A673 (cell line): ENCODE measurements at regions of chr9 and their contacts with region 1.

Region 1: GRCh38 chr9:37329576-37329975 is 92.9 kb upstream of the GRHPR start:
- DNase-seq: peak; percentile 81
- H3K4me3 ChIP-seq: no peak overlapping the region
- H3K27ac ChIP-seq: no peak overlapping the region
- H3K4me1 ChIP-seq: peaks cover 96% of the 10 kb centered on the region
- H3K27me3 ChIP-seq: no peaks in the 10 kb centered on the region
- CTCF ChIP-seq: peak; percentile 72

Region 2: DNA sequence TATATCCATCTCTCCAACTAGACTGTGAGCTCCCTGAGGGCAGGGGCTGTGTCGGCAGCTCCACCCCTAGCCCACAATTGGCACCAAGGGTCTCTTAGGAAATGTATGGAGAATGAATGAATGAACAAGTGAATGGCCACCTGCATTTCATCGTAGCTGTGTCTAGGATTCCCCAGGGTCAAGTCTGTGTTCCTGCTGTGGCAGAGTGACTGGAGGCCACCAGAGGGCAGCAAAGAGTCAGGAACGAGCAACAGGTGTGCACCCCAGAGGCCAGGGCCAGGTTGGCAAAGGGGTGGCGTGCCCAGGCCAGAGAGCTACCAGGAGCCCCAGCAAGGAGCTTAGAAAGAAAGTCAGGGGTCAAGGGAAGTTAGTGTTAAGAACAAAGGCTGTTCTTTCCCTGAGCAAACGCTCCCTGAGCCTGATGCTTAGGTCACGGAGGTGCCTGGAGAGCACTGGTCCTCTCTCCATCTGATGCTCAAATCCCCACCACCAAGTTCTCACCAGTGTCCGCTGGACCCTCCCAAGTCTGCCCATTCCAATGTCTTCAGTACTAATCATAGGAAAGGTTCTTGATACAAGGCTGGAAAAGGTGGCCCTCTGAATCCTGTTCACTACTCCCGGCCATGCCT is 456.2 kb before region 1 on chr9:
- CTCF ChIA-PET with region 1: interaction called, 4 read pairs
- POLR2A ChIA-PET with region 1: no interaction called
- intact Hi-C with region 1: loop called (anchors 2 kb)
- DNase-seq: peak; percentile 72
- H3K4me3 ChIP-seq: no peak overlapping the region
- H3K27ac ChIP-seq: no peak overlapping the region
- H3K4me1 ChIP-seq: no peaks in the 10 kb centered on the region
- H3K27me3 ChIP-seq: no peaks in the 10 kb centered on the region
- CTCF ChIP-seq: peak; percentile 95

Region 3: DNA sequence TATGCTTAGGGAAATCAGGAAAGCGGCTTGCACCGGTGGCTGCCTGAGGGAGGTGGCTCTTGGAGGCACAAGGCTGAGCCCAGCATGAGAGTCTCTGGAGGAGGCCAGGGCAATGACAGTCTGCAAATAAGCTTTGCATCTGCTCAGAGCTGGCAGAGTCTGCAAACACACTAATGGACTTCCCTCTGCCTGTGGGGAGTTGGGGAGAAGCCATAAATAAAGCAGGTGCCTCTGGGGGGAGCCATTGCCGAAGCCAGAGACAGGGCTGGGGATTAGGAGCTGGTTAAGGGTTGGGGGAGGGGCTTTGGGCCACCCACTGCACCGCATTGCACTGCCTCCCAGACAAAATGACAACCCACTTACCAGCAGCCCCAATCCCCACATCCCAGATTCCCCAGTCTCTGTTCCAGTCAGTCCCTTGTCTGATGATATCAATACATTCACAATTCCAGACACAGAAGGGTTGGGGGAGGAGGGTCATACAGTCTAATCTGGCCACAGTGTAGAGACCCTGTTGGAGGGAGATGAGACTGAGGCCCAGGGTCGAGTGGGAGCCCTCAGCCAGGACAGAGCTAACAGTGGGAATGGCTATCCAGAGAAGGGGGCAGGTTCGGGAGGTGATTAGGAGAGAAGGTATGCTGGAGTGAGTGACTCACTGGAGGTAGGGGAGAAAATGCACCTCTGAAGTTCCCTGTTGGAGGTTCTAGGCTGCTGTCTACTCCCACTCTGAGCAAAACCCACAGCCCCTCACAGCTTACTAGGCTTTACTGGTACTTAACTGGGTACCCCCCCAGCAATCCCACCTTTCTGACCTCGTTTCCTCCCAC is 349.2 kb before region 1 on chr9:
- CTCF ChIA-PET with region 1: interaction called, 3 read pairs
- POLR2A ChIA-PET with region 1: no interaction called
- intact Hi-C with region 1: loop called (anchors 5 kb)
- DNase-seq: peak; percentile 91
- H3K4me3 ChIP-seq: no peak overlapping the region
- H3K27ac ChIP-seq: no peak overlapping the region
- H3K4me1 ChIP-seq: peaks cover 16% of the 10 kb centered on the region
- H3K27me3 ChIP-seq: no peaks in the 10 kb centered on the region
- CTCF ChIP-seq: peak; percentile 69

Region 4: DNA sequence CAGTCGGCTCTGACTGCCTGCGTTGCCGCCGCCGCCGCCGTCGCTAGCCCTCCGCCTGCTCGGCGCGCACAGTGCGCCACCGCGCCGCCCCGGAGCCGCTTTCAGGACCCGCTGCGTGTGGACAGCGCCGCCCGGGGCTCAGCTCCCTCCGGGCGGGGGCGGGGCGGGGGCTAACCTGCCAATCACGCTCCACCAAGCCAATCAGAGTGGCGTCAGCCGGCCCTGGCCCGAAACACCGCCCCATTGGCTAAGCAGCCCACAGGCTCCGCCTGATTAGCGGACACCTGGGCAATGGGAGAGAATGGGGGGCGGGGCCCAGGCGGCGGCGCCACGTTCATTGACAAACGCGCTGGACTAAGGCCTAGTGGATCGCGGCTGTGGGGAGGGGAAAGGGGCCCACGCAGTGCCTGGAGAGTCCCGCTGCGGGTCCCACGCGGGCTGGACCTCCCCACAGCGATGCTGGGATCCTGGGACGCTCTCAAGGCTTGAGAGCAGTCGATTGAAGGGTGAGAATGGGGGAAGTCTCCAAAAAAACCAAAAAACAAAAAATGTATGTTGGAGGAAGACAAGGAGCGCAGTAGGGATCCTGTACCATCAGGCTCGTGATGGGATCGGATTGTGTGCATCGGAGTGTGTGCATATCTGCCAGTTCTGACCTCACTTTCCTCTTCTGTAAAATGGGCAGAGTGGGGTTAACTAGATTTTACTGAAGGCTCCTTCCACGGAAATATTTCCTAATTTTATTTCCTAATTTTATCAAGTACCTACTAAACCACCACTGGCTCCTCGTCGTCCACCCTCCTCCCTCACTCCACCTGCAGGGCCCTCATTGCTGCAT is 301.8 kb before region 1 on chr9:
- CTCF ChIA-PET with region 1: no interaction called
- POLR2A ChIA-PET with region 1: no interaction called
- intact Hi-C with region 1: loop called (anchors 10 kb)
- DNase-seq: peak; percentile 99
- H3K4me3 ChIP-seq: peak overlapping the region; percentile 56
- H3K27ac ChIP-seq: no peak overlapping the region
- H3K4me1 ChIP-seq: no peaks in the 10 kb centered on the region
- H3K27me3 ChIP-seq: peaks cover 9% of the 10 kb centered on the region
- CTCF ChIP-seq: no peak

Region 5: GRCh38 chr9:37262410-37262809 is 67.2 kb before region 1 on chr9:
- CTCF ChIA-PET with region 1: no interaction called
- POLR2A ChIA-PET with region 1: no interaction called
- intact Hi-C with region 1: no loop called
- DNase-seq: peak; percentile 68
- H3K4me3 ChIP-seq: no peak overlapping the region
- H3K27ac ChIP-seq: no peak overlapping the region
- H3K4me1 ChIP-seq: peaks cover 11% of the 10 kb centered on the region
- H3K27me3 ChIP-seq: no peaks in the 10 kb centered on the region
- CTCF ChIP-seq: peak; percentile 80

Region 6: DNA sequence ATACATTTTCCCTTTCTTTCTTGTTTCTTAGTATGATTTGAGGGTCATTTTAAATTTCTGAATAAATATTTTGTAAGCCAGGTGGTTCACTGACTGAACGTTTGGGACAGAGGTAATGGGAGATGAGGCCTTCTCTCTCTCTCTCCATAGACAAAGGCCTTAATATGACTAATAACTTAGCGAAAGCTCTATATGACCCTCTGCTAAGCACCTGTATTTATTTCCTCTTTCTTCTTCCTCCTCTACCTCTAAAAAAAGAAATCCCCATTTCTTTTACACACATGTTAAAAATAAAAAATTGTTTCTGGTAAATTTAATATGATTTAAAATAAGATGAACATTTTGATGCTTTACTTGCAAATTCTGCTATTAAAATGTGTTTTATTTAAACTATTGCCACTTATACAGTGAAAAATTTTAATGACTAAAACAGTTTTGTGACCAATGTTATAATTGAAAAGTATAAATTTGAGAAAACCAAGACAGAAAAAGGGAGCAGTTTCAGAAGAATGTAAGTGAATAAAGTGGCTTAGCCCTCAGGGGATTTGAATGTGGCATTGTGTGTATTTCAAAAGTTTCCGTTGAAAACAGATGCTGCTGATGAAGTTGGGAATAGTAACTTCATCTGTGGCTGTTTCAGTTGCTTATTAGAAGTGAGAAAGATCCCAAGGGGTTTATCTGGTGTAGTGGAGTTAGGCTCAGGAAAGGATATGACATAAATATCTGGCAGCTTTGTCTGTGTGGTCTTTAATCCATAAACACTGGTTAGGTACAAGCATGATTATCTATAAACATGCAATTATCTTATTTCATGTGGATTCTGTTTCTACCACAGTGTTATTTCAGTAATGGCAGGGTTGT is 35.7 kb before region 1 on chr9:
- CTCF ChIA-PET with region 1: no interaction called
- POLR2A ChIA-PET with region 1: no interaction called
- intact Hi-C with region 1: loop called (anchors 5 kb)
- DNase-seq: peak; percentile 96
- H3K4me3 ChIP-seq: no peak overlapping the region
- H3K27ac ChIP-seq: peak overlapping the region; percentile 80
- H3K4me1 ChIP-seq: peaks cover 67% of the 10 kb centered on the region
- H3K27me3 ChIP-seq: no peaks in the 10 kb centered on the region
- CTCF ChIP-seq: no peak